GM12878 (cell line): ENCODE measurements at regions of chr16 and their contacts with region 1.

Region 1: DNA sequence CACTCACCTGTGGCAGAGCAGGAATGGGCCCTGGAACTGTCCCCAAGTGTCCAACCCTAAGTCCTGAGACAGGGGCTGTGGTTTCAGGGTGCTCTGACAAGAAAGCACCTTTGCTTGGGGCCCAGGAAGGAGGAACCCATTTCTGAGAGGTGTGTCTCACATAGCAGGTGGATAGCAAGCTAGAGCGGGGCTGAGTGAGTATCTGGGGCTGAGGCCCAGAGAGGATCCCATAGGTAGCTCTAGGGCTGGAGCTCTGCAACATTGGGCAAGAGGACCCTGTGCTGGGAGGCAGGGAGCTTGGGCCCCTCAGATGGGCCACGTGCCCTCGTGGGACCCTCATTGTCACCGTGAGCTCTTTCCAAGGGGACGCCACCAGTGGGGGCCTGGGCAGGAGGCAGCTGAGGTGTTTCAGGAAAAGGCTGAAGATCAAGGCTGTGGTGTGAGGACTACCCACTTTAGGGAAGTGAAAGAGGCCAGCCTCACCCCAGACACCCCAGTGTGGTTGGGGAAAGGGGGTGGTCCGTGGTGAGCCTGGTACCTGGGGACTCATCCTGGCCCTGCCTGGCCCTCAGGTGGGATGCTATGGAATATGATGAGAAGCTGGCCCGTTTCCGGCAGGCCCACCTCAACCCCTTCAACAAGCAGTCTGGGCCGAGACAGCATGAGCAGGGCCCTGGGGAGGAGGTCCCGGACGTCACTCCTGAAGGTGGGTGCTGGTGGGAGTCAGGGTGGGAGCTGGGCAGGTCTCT is 5.3 kb downstream of the DEF8 start:
- DNase-seq: no peak
- ATAC-seq: peak; percentile 89
- H3K4me3 ChIP-seq: no peak overlapping the region
- H3K27ac ChIP-seq: peak overlapping the region; percentile 61
- H3K4me1 ChIP-seq: peaks cover 52% of the 10 kb centered on the region
- H3K27me3 ChIP-seq: no peaks in the 10 kb centered on the region
- CTCF ChIP-seq: no peak
- EP300 ChIP-seq: peak; percentile 34 to 86; a peak in 3 of 4 replicates
- POLR2A ChIP-seq: no peak
- RAD21 ChIP-seq: no peak

Region 2: DNA sequence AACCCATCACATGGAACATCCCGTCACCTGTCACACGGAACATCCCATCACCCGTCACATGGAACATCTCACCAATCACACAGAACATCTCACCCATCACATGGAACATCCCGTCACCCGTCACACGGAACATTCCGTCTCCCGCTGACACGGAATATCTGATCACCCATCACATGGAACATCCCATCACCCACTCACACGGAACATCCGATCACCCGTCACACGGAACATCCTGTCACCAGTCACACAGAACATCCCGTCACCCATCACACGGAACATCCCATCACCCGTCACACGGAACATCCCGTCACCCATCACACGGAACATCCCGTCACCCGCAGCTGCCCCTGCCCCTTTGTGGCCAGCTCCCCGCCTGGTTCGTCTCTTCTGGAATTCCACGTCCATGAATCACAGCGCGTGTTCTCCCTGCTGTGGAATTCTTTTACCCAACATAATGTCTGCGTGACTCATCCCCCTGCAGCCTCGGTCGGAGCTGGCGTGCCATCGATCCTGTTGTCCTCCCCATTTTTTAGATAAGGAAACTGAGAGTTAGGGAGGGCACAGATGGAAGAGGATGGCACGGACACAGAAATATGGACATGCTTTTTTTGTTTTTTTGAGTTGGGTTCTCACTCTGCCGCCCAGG is 372.7 kb before region 1 on chr16:
- CTCF ChIA-PET with region 1: no interaction called
- POLR2A ChIA-PET with region 1: no interaction called
- RAD21 ChIA-PET with region 1: no interaction called
- SMC1A ChIA-PET with region 1: no interaction called
- in situ Hi-C with region 1: no loop called
- intact Hi-C with region 1: no loop called
- DNase-seq: no peak
- ATAC-seq: no peak
- H3K4me3 ChIP-seq: no peak overlapping the region
- H3K27ac ChIP-seq: no peak overlapping the region
- H3K4me1 ChIP-seq: no peaks in the 10 kb centered on the region
- H3K27me3 ChIP-seq: no peaks in the 10 kb centered on the region
- CTCF ChIP-seq: no peak
- EP300 ChIP-seq: no peak
- POLR2A ChIP-seq: no peak
- RAD21 ChIP-seq: no peak

Region 3: GRCh38 chr16:89893642-89894509 is 60.0 kb before region 1 on chr16:
- CTCF ChIA-PET with region 1: no interaction called
- POLR2A ChIA-PET with region 1: no interaction called
- RAD21 ChIA-PET with region 1: no interaction called
- SMC1A ChIA-PET with region 1: no interaction called
- in situ Hi-C with region 1: no loop called
- intact Hi-C with region 1: no loop called
- DNase-seq: no peak
- ATAC-seq: no peak
- H3K4me3 ChIP-seq: no peak overlapping the region
- H3K27ac ChIP-seq: no peak overlapping the region
- H3K4me1 ChIP-seq: no peaks in the 10 kb centered on the region
- H3K27me3 ChIP-seq: no peaks in the 10 kb centered on the region
- CTCF ChIP-seq: no peak
- EP300 ChIP-seq: no peak
- POLR2A ChIP-seq: peak; percentile 35; the same call in 1 of the 2 replicates
- RAD21 ChIP-seq: no peak

Region 4: DNA sequence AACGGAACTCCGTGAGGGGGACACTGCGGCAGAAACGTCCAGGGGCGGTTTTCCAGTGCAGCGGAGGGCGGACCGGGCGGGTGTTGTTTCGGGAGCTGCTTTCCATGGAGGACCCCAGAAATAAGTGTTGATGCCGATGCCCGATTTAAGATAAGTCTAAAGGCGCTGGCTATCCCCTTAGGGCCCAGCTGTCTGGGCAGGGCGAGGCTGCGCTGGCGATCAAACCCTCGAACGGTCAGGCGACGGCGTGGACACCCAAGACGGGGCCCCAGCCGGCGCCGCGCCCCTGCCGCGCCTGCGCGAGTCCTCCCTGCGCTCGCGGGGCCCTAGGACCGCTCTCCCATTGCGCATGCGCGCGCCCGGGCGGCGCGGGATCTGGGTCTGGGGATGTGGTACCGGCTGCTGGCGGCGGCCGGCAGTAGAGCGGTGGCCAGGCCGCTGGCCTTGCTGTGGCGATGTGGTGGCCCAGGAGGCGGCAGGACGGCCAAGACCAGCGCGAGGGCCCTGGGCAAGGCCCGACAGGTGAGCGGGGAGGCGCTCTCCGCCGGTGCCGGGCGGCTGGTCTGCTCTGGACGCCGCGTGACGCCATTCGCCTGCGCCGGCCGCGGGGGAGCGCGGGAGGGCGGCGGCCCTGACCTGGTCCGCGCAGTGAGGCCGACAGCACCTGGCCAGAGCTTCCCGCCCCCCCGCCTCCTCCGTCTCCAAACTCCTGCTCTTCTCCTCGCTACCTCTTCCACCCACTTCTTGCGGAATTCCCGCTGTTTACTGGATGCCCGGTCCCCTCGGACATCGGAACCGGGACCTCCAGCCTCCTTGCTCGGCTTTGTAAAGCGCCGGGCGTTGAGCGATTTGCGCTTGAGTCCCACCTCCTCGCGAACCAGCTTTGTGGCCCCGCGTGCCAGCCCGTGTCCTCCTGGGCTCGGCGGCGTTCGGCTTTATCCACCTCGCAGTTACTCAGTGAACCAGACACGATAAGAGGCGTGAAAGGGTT is 18.7 kb after region 1 on chr16:
- CTCF ChIA-PET with region 1: interaction called, 3 read pairs
- POLR2A ChIA-PET with region 1: interaction called, 10 read pairs
- RAD21 ChIA-PET with region 1: interaction called, 4 read pairs
- SMC1A ChIA-PET with region 1: interaction called, 4 read pairs
- in situ Hi-C with region 1: no loop called
- intact Hi-C with region 1: no loop called
- DNase-seq: no peak
- ATAC-seq: peak; percentile 91
- H3K4me3 ChIP-seq: peak overlapping the region; percentile 100
- H3K27ac ChIP-seq: peak overlapping the region; percentile 93
- H3K4me1 ChIP-seq: peaks cover 14% of the 10 kb centered on the region
- H3K27me3 ChIP-seq: no peaks in the 10 kb centered on the region
- CTCF ChIP-seq: no peak
- EP300 ChIP-seq: no peak
- POLR2A ChIP-seq: peak; percentile 95
- RAD21 ChIP-seq: no peak